ENCODE measurements at regions of chr1 and their contacts with region 1.

Region 1: GRCh38 chr1:147172168-147172992 is at the start of gene PRKAB2:
- DNase-seq: peak; percentile 91
- ATAC-seq: peak; percentile 93
- H3K4me3 ChIP-seq: peak within 1 kb of the TSS; percentile 85 to 99 (median 99)
- H3K27ac ChIP-seq: peak within 1 kb of the TSS; percentile 89
- H3K4me1 ChIP-seq: peaks cover 40% of the 10 kb centered on the region
- H3K27me3 ChIP-seq: peaks cover 0 to 4% of the 10 kb centered on the region in 2 experiments; a peak in 1 of 5 replicates
- CTCF ChIP-seq: peak; percentile 92
- EP300 ChIP-seq: peak in 1 of 2 experiments; percentile 35; a peak in 1 of 4 replicates
- POLR2A ChIP-seq: peak in 1 of 2 experiments; percentile 59; a peak in 3 of 4 replicates
- RAD21 ChIP-seq: peak; percentile 99
- total RNA-seq, gene PRKAB2: 43.3 and 44.0 TPM in 2 replicates

Region 2: GRCh38 chr1:147162093-147162492 is 10.3 kb before region 1 on chr1:
- CTCF ChIA-PET with region 1: no interaction called
- POLR2A ChIA-PET with region 1: no interaction called
- in situ Hi-C with region 1: no loop called
- intact Hi-C with region 1: no loop called
- DNase-seq: no peak
- ATAC-seq: no peak
- H3K4me3 ChIP-seq: no peak overlapping the region
- H3K27ac ChIP-seq: no peak overlapping the region
- H3K4me1 ChIP-seq: peaks cover 24% of the 10 kb centered on the region
- H3K27me3 ChIP-seq: no peaks in the 10 kb centered on the region
- CTCF ChIP-seq: no peak
- EP300 ChIP-seq: no peak
- POLR2A ChIP-seq: no peak
- RAD21 ChIP-seq: no peak

Region 3: GRCh38 chr1:147225193-147225730 is 52.9 kb after region 1 on chr1 and contains the start of gene FMO5:
- CTCF ChIA-PET with region 1: no interaction called
- POLR2A ChIA-PET with region 1: interaction called, 11 read pairs
- in situ Hi-C with region 1: no loop called
- intact Hi-C with region 1: no loop called
- DNase-seq: no peak
- ATAC-seq: peak; percentile 93
- H3K4me3 ChIP-seq: peak within 1 kb of the TSS; percentile 62 to 80 (median 69)
- H3K27ac ChIP-seq: peak within 1 kb of the TSS; percentile 74
- H3K4me1 ChIP-seq: peaks cover 59% of the 10 kb centered on the region
- H3K27me3 ChIP-seq: no peaks in the 10 kb centered on the region; a peak in 1 of 5 replicates
- CTCF ChIP-seq: peak; percentile 9; the same call in 1 of the 2 replicates
- EP300 ChIP-seq: no peak
- POLR2A ChIP-seq: peak in 1 of 2 experiments; percentile 90; a peak in 2 of 4 replicates
- RAD21 ChIP-seq: no peak
- total RNA-seq, gene FMO5: 48.2 and 59.5 TPM in 2 replicates

Region 4: DNA sequence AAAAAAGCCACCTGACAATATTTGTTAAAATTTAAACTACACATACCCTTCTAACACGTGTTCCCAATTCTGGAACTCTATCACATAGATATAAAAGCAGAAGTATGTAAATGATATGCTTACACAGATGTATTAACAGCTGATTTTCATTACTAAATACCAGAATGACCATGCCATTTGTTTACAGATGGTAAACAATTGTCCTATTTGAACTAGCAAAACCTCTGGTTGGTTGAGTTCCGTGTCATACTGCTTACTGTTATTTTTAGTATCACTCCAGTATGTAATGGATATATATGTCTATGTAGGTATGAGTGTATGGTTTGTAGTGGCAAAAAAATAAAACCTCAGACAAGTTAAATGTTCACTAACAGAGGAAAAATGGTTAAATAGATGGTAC is 140.9 kb after region 1 on chr1:
- CTCF ChIA-PET with region 1: no interaction called
- POLR2A ChIA-PET with region 1: no interaction called
- in situ Hi-C with region 1: no loop called
- intact Hi-C with region 1: no loop called
- DNase-seq: no peak
- ATAC-seq: no peak
- H3K4me3 ChIP-seq: no peak overlapping the region
- H3K27ac ChIP-seq: no peak overlapping the region
- H3K4me1 ChIP-seq: no peaks in the 10 kb centered on the region
- H3K27me3 ChIP-seq: no peaks in the 10 kb centered on the region; a peak in 1 of 5 replicates
- CTCF ChIP-seq: no peak
- EP300 ChIP-seq: no peak
- POLR2A ChIP-seq: no peak
- RAD21 ChIP-seq: no peak

Measured in HepG2 (cell line).